Endothelial cell of umbilical vein (primary cell): ENCODE measurements at regions of chr20 and their contacts with region 1.

Region 1: GRCh38 chr20:13037727-13038126 is 29.0 kb downstream of the SPTLC3 start:
- DNase-seq: no peak
- H3K4me3 ChIP-seq: no peak overlapping the region
- H3K27ac ChIP-seq: no peak overlapping the region
- H3K4me1 ChIP-seq: no peaks in the 10 kb centered on the region
- H3K27me3 ChIP-seq: no peaks in the 10 kb centered on the region
- CTCF ChIP-seq: no peak
- POLR2A ChIP-seq: no peak

Region 2: DNA sequence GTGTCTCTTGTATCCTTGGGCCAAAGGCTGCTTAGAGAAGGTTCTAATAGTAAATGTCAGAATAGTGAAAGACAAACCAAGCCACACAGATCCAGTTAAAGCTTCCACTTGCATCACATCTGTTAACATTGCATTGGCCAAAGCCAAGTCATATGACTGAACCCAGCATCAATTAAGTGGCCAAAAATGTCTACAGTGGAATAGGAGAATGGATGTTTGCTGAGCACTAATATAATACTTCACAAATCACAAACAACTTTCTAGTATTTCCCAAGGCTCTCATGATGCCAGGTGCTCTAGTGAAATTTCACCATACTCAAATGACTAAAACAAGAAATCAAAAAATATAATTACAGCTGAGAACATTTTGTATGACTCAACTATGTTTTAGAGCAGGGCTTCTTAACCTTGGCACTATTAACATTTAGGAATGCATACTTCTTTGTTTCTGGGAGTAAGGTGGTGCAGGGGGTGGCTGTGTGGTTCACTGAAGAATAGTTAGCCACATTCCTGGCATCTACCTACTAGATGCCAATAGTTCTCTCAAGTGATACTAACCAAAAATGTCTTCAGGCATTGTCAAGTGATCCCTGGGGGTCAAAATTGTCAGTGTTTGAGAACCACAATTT is 177.0 kb before region 1 on chr20:
- CTCF ChIA-PET with region 1: no interaction called
- POLR2A ChIA-PET with region 1: no interaction called
- dilution Hi-C with region 1: no loop called
- intact Hi-C with region 1: no loop called
- DNase-seq: no peak
- H3K4me3 ChIP-seq: no peak overlapping the region
- H3K27ac ChIP-seq: no peak overlapping the region
- H3K4me1 ChIP-seq: no peaks in the 10 kb centered on the region
- H3K27me3 ChIP-seq: no peaks in the 10 kb centered on the region
- CTCF ChIP-seq: no peak
- POLR2A ChIP-seq: no peak

Region 3: GRCh38 chr20:13082374-13082773 is 44.6 kb after region 1 on chr20:
- CTCF ChIA-PET with region 1: no interaction called
- POLR2A ChIA-PET with region 1: no interaction called
- dilution Hi-C with region 1: no loop called
- intact Hi-C with region 1: loop called (anchors 5 kb)
- DNase-seq: no peak
- H3K4me3 ChIP-seq: no peak overlapping the region
- H3K27ac ChIP-seq: no peak overlapping the region
- H3K4me1 ChIP-seq: no peaks in the 10 kb centered on the region
- H3K27me3 ChIP-seq: no peaks in the 10 kb centered on the region
- CTCF ChIP-seq: no peak
- POLR2A ChIP-seq: no peak